ENCODE measurements at regions of chr6 and their contacts with region 1.

Region 1: DNA sequence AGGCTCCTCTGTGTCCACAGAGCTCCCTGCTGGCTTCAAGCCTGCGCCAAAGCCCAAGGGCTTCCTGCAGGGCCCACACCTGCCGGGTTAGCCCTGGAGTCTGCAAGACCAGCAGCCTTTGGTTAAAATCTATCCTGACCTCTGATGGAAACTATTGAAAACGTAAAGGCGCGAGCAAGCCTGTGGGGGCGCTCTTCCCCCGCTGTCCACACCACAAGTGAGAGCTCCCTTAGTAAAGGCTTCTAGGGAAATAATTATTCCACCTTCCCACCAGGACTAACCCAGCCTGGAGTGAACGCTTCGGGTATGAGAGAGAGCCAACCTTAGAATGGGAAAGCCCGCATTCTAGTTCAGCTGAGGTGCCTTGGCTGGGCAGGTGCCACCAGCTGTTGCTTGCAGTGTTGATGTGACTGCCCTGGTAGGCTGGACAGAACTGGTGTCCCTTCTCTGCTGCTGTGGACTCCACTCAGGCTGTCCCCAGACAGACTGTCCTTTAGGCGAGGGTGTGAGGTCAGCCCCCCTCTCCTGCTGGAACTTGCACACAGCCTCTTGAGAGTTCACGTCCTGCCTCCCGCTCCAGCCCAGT is 68.7 kb downstream of the SYTL3 start:
- DNase-seq: no peak
- ATAC-seq: no peak
- H3K4me3 Mint-ChIP-seq: no peak overlapping the region
- H3K27ac Mint-ChIP-seq: no peak overlapping the region
- H3K4me1 Mint-ChIP-seq: peaks cover 57% of the 10 kb centered on the region
- H3K27me3 Mint-ChIP-seq: no peaks in the 10 kb centered on the region
- CTCF ChIP-seq: peak; percentile 39

Region 2: DNA sequence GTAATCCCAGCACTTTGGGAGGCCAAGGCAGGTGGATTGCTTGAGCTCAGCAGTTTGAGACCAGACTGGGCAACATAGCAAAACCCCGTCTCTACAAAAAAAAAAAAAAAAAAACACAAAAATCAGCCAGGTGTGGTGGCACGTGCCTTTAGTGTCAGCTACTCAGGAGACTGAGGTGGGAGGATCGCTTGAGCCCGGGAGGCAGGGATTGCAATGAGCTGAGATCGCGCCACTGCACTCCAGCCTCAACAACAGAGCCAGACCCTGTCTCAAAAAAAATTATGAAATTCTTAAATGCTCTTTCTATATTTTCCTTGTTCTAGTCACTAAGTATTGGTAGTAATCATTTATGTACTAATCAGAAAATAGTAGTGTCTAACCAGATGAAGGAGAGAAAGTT is 38.1 kb before region 1 on chr6:
- CTCF ChIA-PET with region 1: no interaction called
- POLR2A ChIA-PET with region 1: no interaction called
- intact Hi-C with region 1: no loop called
- DNase-seq: no peak
- ATAC-seq: no peak
- H3K4me3 Mint-ChIP-seq: no peak overlapping the region
- H3K27ac Mint-ChIP-seq: no peak overlapping the region
- H3K4me1 Mint-ChIP-seq: peaks cover 32% of the 10 kb centered on the region
- H3K27me3 Mint-ChIP-seq: no peaks in the 10 kb centered on the region
- CTCF ChIP-seq: no peak

Region 3: GRCh38 chr6:158704181-158704822 is 14.3 kb before region 1 on chr6:
- CTCF ChIA-PET with region 1: interaction called, 7 read pairs
- POLR2A ChIA-PET with region 1: interaction called, 12 read pairs
- intact Hi-C with region 1: no loop called
- DNase-seq: peak; percentile 78
- ATAC-seq: peak; percentile 94
- H3K4me3 Mint-ChIP-seq: peak overlapping the region; percentile 47
- H3K27ac Mint-ChIP-seq: peak overlapping the region; percentile 67
- H3K4me1 Mint-ChIP-seq: peaks cover 21% of the 10 kb centered on the region
- H3K27me3 Mint-ChIP-seq: no peaks in the 10 kb centered on the region
- CTCF ChIP-seq: peak; percentile 98

Measured in activated CD8-positive, alpha-beta T cell treated with anti-CD3 and anti-CD28 coated beads for 36 hours (primary cell).